ENCODE measurements at regions of chr1 and their contacts with region 1.

Region 1: GRCh38 chr1:19596714-19597495 is 47.2 kb upstream of the NBL1 start:
- DNase-seq: peak; percentile 92 to 99 (median 96)

Region 2: GRCh38 chr1:19485362-19486187 is 111.3 kb before region 1 on chr1 and contains the start of gene CAPZB:
- intact Hi-C with region 1: loop called (anchors 10 kb)
- DNase-seq: peak; percentile 80 to 98 (median 96)

Region 3: GRCh38 chr1:19866758-19867157 is 269.9 kb after region 1 on chr1:
- intact Hi-C with region 1: no loop called
- DNase-seq: no peak

Measured in head of caudate nucleus (tissue), 42 donors.